ENCODE measurements at regions of chr3 and their contacts with region 1.

Region 1: GRCh38 chr3:125141596-125142419 is 70.7 kb downstream of the SLC12A8 start:
- DNase-seq: peak; percentile 69
- H3K4me3 Mint-ChIP-seq: peak overlapping the region; percentile 76
- H3K27ac Mint-ChIP-seq: peak overlapping the region; percentile 81
- H3K4me1 Mint-ChIP-seq: peaks cover 61% of the 10 kb centered on the region
- H3K27me3 Mint-ChIP-seq: peaks cover 34% of the 10 kb centered on the region

Region 2: GRCh38 chr3:124730129-124730940 is 411.5 kb before region 1 on chr3 and contains the start of gene UMPS:
- intact Hi-C with region 1: loop called (anchors 10 kb)
- DNase-seq: peak; percentile 89
- H3K4me3 Mint-ChIP-seq: peak within 1 kb of the TSS; percentile 100
- H3K27ac Mint-ChIP-seq: peak within 1 kb of the TSS; percentile 100
- H3K4me1 Mint-ChIP-seq: peaks cover 41% of the 10 kb centered on the region
- H3K27me3 Mint-ChIP-seq: peaks cover 23% of the 10 kb centered on the region
- total RNA-seq, gene UMPS: 54.2 and 56.3 TPM in 2 replicates

Region 3: GRCh38 chr3:125110016-125110875 is 31.6 kb before region 1 on chr3:
- intact Hi-C with region 1: loop called (anchors 1 kb)
- DNase-seq: no peak
- H3K4me3 Mint-ChIP-seq: no peak overlapping the region
- H3K27ac Mint-ChIP-seq: peak overlapping the region; percentile 77
- H3K4me1 Mint-ChIP-seq: peaks cover 33% of the 10 kb centered on the region
- H3K27me3 Mint-ChIP-seq: peaks cover 22% of the 10 kb centered on the region

Region 4: GRCh38 chr3:125125821-125126245 is 16.0 kb before region 1 on chr3:
- intact Hi-C with region 1: loop called (anchors 1 kb)
- DNase-seq: no peak
- H3K4me3 Mint-ChIP-seq: peak overlapping the region; percentile 12
- H3K27ac Mint-ChIP-seq: peak overlapping the region; percentile 76
- H3K4me1 Mint-ChIP-seq: peaks cover 60% of the 10 kb centered on the region
- H3K27me3 Mint-ChIP-seq: peaks cover 7% of the 10 kb centered on the region

Region 5: DNA sequence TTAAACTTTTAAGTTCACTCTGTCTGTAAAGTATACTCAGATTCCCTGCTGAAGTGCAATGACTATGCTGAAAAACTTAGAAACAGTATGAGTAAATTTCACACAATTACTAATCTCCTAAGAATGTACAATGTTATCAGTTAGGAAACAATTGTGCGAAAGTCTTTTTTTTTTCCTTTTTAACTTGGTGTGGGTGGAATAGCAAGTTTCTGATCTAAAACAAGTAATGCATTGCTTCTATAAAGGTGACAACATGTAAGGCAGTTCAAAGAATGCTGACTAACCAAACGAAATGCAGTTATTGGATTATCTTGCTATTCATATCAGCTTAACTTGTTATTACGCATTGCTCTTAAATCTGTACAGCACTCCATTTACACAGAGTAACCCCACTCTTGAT is 90.1 kb after region 1 on chr3:
- intact Hi-C with region 1: loop called (anchors 1 kb)
- DNase-seq: no peak
- H3K4me3 Mint-ChIP-seq: no peak overlapping the region
- H3K27ac Mint-ChIP-seq: peak overlapping the region; percentile 58
- H3K4me1 Mint-ChIP-seq: peaks cover 23% of the 10 kb centered on the region
- H3K27me3 Mint-ChIP-seq: no peaks in the 10 kb centered on the region